Activated CD4-positive, alpha-beta T cell treated with anti-CD3 and anti-CD28 coated beads for 36 hours (primary cell): ENCODE measurements at regions of chr15 and their contacts with region 1.

Region 1: DNA sequence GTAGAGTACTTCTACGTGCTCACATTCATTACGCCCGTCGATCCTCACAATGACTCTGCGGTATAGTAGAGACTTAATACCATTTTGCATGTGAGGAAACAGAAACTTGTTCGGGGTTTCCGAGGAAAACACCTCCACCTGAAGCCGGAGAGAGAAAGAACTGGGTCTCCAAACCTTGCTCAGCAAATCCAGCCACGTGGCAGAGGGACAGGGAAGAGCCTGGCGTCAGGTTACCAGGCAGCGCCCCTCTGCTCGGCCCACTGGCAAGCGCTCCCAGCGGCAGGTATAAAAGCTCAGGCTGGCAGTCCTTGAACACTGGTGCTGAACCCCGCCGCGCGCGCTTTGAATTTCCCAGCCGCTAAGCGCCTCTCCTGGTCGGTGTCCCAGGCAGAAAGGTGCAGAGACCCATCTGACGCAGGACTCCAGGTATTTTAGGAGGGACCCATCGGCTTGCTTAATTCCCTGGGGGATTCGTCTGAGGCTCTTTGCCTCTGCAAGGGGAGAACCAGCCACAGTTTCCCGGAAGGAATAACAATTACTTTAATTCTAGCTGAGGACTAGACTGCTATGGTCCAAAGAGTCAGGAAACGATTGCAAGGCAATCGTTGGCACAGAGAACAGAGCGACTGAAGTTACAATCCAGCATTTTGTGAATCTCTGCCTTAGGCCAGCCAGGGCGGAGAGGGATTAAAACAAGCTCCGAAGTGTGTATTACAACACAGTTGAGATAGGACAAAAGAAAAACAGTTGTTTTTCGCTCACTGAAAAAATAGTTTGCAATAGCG is at the start of gene C2CD4A:
- DNase-seq: peak; percentile 82
- ATAC-seq: peak; percentile 73
- H3K4me3 Mint-ChIP-seq: peak within 1 kb of the TSS; percentile 77
- H3K27ac Mint-ChIP-seq: peak within 1 kb of the TSS; percentile 52
- H3K4me1 Mint-ChIP-seq: peaks cover 32% of the 10 kb centered on the region
- H3K27me3 Mint-ChIP-seq: peaks cover 19% of the 10 kb centered on the region
- total RNA-seq, gene C2CD4A: 0.61 to 0.73 TPM

Region 2: GRCh38 chr15:61974759-61975158 is 92.1 kb before region 1 on chr15:
- CTCF ChIA-PET with region 1: interaction called, 3 read pairs
- POLR2A ChIA-PET with region 1: no interaction called
- intact Hi-C with region 1: loop called (anchors 5 to 10 kb)
- DNase-seq: no peak
- ATAC-seq: peak; percentile 19
- H3K4me3 Mint-ChIP-seq: no peak overlapping the region
- H3K27ac Mint-ChIP-seq: no peak overlapping the region
- H3K4me1 Mint-ChIP-seq: peaks cover 8% of the 10 kb centered on the region
- H3K27me3 Mint-ChIP-seq: no peaks in the 10 kb centered on the region

Region 3: DNA sequence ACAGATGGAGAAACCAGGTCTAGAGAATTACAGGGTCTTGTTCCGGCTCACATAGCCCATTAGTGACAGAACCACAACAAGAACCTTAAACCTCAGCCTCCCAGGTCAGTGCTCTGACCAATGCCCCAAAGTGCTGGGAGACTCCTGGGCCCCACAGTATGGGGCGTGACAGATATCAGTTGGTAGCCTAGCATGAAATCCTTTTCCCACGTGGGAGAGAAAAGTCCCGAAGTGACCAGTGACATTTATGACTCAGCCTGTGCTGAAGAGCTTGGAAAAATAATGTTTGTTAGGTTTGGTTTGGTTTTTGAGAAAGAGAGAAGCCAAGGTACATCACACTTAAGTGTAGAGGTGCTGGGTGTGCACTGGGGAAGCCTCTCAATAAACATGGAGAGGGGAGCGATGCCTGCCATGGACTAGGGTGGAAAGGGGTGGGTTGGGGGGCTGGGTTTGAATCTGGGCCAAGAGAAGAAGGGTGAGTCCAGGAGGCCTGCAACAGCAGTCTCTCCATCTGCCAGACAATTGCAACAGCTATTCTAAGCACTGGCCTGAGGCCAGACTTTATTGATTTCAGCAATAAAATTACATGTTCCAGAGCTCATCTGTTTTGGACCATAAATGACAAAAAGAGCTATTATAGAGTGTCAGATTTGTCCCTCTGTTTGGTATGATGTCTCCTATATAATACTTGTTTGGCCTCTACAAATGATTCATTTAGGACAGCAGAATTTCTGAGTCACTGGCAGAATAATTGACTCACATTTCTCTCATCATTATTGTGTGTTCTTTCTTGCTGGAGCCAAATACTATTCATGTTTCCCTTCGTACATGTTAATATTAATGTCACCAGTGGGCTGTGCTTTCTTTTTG is 43.4 kb after region 1 on chr15:
- CTCF ChIA-PET with region 1: interaction called, 4 read pairs
- POLR2A ChIA-PET with region 1: no interaction called
- intact Hi-C with region 1: loop called (anchors 1 to 5 kb)
- DNase-seq: no peak
- ATAC-seq: peak; percentile 91
- H3K4me3 Mint-ChIP-seq: no peak overlapping the region
- H3K27ac Mint-ChIP-seq: peak overlapping the region; percentile 73
- H3K4me1 Mint-ChIP-seq: peaks cover 16% of the 10 kb centered on the region
- H3K27me3 Mint-ChIP-seq: peaks cover 4% of the 10 kb centered on the region

Region 4: GRCh38 chr15:62165104-62165792 is 98.4 kb after region 1 on chr15 and contains the start of gene C2CD4B:
- CTCF ChIA-PET with region 1: interaction called, 4 read pairs
- POLR2A ChIA-PET with region 1: no interaction called
- intact Hi-C with region 1: loop called in 1 of 2 experiments (anchors 2 kb)
- DNase-seq: peak; percentile 60
- ATAC-seq: peak; percentile 83
- H3K4me3 Mint-ChIP-seq: peak within 1 kb of the TSS; percentile 69
- H3K27ac Mint-ChIP-seq: no peak within 1 kb of the TSS
- H3K4me1 Mint-ChIP-seq: peaks cover 15% of the 10 kb centered on the region
- H3K27me3 Mint-ChIP-seq: peaks cover 48% of the 10 kb centered on the region
- total RNA-seq, gene C2CD4B: 0.19 to 0.37 TPM